ENCODE measurements at regions of chr6 and their contacts with region 1.

Region 1: DNA sequence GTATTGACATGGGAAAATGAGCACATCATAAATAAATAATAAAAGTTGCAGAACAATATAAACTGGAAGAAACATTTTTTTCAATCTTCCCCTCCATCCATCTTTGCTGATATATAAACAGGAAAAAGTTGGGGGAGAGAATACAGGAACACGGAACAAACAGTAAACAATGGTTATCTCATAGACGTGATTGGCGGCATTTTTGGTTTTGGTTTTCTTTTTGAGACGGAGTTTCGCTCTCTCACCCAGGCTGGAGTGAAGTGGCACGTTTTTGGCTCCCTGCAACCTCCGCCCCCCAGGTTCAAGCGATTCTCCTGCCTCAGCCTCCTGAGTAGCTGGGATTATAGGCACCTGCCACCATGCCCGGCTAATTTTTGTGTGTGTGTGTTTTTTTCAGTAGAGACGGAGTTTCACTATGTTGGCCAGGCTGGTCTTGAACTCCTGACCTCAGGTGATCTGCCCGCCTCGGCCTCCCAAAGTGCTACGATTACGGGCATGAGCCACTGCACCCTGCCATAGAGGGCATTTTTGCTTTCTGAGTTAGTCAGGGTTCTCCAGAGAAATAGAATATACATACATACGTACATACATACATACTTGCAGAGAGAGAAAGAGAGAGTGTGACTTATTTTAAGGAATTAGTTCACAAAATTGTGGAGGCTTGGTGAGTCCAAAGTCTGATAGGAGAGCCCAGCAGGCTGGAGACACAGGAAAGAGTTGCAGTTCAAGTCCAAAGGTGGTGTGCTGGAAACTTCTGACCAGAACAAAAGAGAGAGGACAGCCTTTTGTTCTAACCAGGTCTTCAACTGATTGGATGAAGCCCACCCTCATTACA is 22.6 kb downstream of the GNL1 start:
- DNase-seq: no peak
- H3K4me3 ChIP-seq: no peak overlapping the region
- H3K27ac ChIP-seq: no peak overlapping the region
- H3K27me3 ChIP-seq: no peaks in the 10 kb centered on the region
- CTCF ChIP-seq: no peak

Region 2: DNA sequence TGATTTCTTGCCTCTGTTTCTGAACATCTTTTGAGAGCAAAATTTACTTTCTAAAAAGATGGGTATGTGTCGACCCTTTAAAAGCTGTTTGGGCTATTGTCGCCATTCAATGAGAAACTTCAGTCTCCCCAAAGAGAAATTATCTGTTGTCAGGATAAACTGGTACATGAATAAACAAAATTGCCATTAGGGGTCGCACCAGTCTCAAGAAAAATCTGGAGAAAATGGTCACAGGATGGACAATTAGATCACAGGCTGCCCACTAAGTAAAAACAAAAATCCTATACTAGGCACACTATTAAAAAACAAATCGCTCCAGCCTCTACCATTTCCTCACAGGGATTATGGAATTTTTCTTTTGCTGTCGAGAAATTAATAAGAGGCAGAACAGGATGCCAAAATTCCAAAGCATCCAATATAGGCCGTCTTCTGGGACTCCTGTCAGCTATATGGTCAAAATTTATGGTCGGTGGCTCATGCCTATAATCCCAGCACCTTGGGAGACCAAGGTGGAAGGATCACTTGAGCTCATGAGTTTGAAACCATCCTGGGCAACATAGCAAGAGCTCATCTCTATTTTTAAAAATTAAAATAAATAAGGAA is 49.9 kb before region 1 on chr6:
- intact Hi-C with region 1: loop called in 1 of 2 experiments (anchors 2 kb)
- DNase-seq: no peak
- H3K4me3 ChIP-seq: no peak overlapping the region
- H3K27ac ChIP-seq: no peak overlapping the region
- H3K27me3 ChIP-seq: peaks cover 4 to 66% (median 35%) of the 10 kb centered on the region in 45 donors
- CTCF ChIP-seq: peak; percentile 40 to 86 (median 68)

Region 3: GRCh38 chr6:30489081-30490025 is 44.3 kb before region 1 on chr6 and contains the start of gene HLA-E:
- intact Hi-C with region 1: loop called (anchors 2 to 5 kb)
- DNase-seq: peak; percentile 43 to 94 (median 85)
- H3K4me3 ChIP-seq: peak within 1 kb of the TSS; percentile 36 to 93 (median 78)
- H3K27ac ChIP-seq: peak within 1 kb of the TSS in 56 of 59 donors; percentile 36 to 97 (median 86)
- H3K27me3 ChIP-seq: peaks cover 0 to 24% (median 0%) of the 10 kb centered on the region in 45 donors
- CTCF ChIP-seq: peak in 7 of 56 donors; percentile 8 to 33 (median 21)
- total RNA-seq, gene HLA-E: 69.4 to 274 (median 123) TPM

Region 4: GRCh38 chr6:30571075-30571768 is 37.5 kb after region 1 on chr6 and contains the start of gene ABCF1:
- intact Hi-C with region 1: no loop called
- DNase-seq: peak; percentile 97 to 100 (median 98)
- H3K4me3 ChIP-seq: peak within 1 kb of the TSS; percentile 60 to 99 (median 84)
- H3K27ac ChIP-seq: peak within 1 kb of the TSS; percentile 16 to 95 (median 87)
- H3K27me3 ChIP-seq: no peaks in the 10 kb centered on the region
- CTCF ChIP-seq: peak in 27 of 56 donors; percentile 1 to 53 (median 28)
- total RNA-seq, gene ABCF1: 24.2 to 44.5 (median 34.1) TPM

Measured in dorsolateral prefrontal cortex (tissue), 120 donors.